Esophagus muscularis mucosa (tissue), 4 donors: ENCODE measurements at regions of chr1 and their contacts with region 1.

Region 1: DNA sequence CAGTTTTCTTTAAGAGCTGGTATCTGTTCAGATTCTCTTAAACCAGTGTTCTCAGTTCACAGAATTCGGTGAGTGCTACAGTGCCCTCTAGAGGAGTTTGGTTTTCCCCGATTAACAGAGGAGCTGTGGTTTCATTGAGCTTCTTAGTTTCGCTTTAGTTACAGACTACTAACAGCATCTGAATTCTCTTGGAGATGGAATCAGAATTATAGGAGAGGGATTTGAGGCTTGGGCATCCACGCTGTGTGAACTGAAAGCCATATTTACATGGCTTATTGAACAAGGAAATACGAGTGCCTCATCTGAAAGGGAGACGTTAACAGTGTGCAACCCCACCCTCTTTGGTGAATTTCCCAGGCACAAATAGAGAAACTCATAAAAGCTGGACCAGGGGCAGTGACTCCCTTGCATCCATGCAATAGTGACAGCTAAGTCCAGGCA is 202.0 kb downstream of the USH2A start:
- DNase-seq: no peak
- H3K4me3 ChIP-seq: peak overlapping the region; percentile 49 to 65 (median 52)
- H3K27ac ChIP-seq: peak overlapping the region; percentile 46 to 57 (median 48)
- H3K4me1 ChIP-seq: peaks cover 0 to 13% (median 7%) of the 10 kb centered on the region in 4 donors
- H3K27me3 ChIP-seq: no peaks in the 10 kb centered on the region
- CTCF ChIP-seq: peak; percentile 59 to 72 (median 66)
- EP300 ChIP-seq: no peak
- POLR2A ChIP-seq: no peak

Region 2: DNA sequence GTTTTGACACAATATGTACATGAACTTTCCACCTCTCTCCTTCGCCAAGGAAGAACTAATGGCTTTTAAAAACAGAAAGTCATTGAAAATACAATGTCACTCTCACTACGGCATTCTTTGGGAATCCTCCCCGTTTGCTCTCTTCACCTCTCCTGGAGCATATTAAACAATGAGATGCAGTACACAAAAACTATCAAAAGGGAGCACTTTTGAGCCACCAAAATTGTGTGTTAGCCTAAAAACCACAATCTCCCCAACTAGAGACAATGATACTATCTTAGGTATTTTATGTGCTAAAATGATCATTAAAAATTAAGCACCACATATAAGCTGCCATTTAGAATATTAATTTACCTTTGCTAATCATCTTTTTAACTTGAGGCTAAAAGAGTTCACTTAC is 228.7 kb before region 1 on chr1:
- intact Hi-C with region 1: loop called (anchors 10 kb)
- DNase-seq: no peak
- H3K4me3 ChIP-seq: no peak overlapping the region
- H3K27ac ChIP-seq: no peak overlapping the region
- H3K4me1 ChIP-seq: no peaks in the 10 kb centered on the region
- H3K27me3 ChIP-seq: no peaks in the 10 kb centered on the region
- CTCF ChIP-seq: peak; percentile 11 to 41 (median 28)
- EP300 ChIP-seq: no peak
- POLR2A ChIP-seq: no peak

Region 3: GRCh38 chr1:216293683-216294082 is 72.4 kb after region 1 on chr1:
- intact Hi-C with region 1: no loop called
- DNase-seq: no peak
- H3K4me3 ChIP-seq: no peak overlapping the region
- H3K27ac ChIP-seq: no peak overlapping the region
- H3K4me1 ChIP-seq: no peaks in the 10 kb centered on the region
- H3K27me3 ChIP-seq: no peaks in the 10 kb centered on the region
- CTCF ChIP-seq: no peak
- EP300 ChIP-seq: no peak
- POLR2A ChIP-seq: no peak